ENCODE measurements at regions of chr15 and their contacts with region 1.

Region 1: GRCh38 chr15:90818251-90819210 is 49.9 kb upstream of the FURIN start:
- DNase-seq: peak; percentile 62
- H3K4me3 Mint-ChIP-seq: peak overlapping the region; percentile 20
- H3K27ac Mint-ChIP-seq: peak overlapping the region; percentile 86
- H3K4me1 Mint-ChIP-seq: peaks cover 51% of the 10 kb centered on the region
- H3K27me3 Mint-ChIP-seq: no peaks in the 10 kb centered on the region

Region 2: GRCh38 chr15:90829942-90830440 is 11.5 kb after region 1 on chr15:
- CTCF ChIA-PET with region 1: interaction called, 5 read pairs
- POLR2A ChIA-PET with region 1: interaction called, 32 read pairs
- intact Hi-C with region 1: loop called (anchors 1 kb)
- DNase-seq: peak; percentile 91
- H3K4me3 Mint-ChIP-seq: peak overlapping the region; percentile 59
- H3K27ac Mint-ChIP-seq: peak overlapping the region; percentile 100
- H3K4me1 Mint-ChIP-seq: peaks cover 39% of the 10 kb centered on the region
- H3K27me3 Mint-ChIP-seq: no peaks in the 10 kb centered on the region

Region 3: GRCh38 chr15:90839187-90840071 is 20.9 kb after region 1 on chr15:
- CTCF ChIA-PET with region 1: interaction called, 7 read pairs
- POLR2A ChIA-PET with region 1: interaction called, 32 read pairs
- intact Hi-C with region 1: no loop called
- DNase-seq: peak; percentile 61
- H3K4me3 Mint-ChIP-seq: peak overlapping the region; percentile 69
- H3K27ac Mint-ChIP-seq: peak overlapping the region; percentile 94
- H3K4me1 Mint-ChIP-seq: peaks cover 57% of the 10 kb centered on the region
- H3K27me3 Mint-ChIP-seq: no peaks in the 10 kb centered on the region

Region 4: DNA sequence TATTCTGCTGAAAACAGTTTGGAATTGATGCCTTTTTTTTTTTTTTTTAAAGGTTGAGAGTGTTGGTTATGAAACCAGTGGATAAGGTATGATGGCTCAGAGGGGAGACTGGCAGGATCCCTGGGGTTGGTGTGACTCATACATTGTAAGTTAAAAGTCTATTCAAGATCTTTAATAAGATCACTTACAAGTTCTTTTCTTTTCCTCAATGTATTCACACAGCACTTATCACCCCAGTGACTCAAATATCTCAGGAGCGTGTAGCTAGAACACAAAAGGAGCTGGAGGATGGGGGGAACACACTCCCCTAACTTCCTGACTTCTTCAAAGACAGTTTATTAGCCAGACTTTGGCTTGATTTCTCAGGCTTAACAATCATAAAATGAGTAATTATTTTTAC is 566.8 kb after region 1 on chr15:
- CTCF ChIA-PET with region 1: no interaction called
- POLR2A ChIA-PET with region 1: no interaction called
- intact Hi-C with region 1: no loop called
- DNase-seq: no peak
- H3K4me3 Mint-ChIP-seq: no peak overlapping the region
- H3K27ac Mint-ChIP-seq: no peak overlapping the region
- H3K4me1 Mint-ChIP-seq: peaks cover 4% of the 10 kb centered on the region
- H3K27me3 Mint-ChIP-seq: no peaks in the 10 kb centered on the region